Activated B cell treated with CpG ODN at 0.5 μM for 24 hours (primary cell): ENCODE measurements at regions of chr14 and their contacts with region 1.

Region 1: GRCh38 chr14:60980811-60981632 is at the starts of genes SLC38A6 and TRMT5:
- DNase-seq: peak; percentile 88
- ATAC-seq: peak; percentile 83
- H3K4me3 Mint-ChIP-seq: no peak within 1 kb of the TSS
- H3K27ac Mint-ChIP-seq: no peak within 1 kb of the TSS
- H3K4me1 Mint-ChIP-seq: peaks cover 17% of the 10 kb centered on the region
- H3K27me3 Mint-ChIP-seq: no peaks in the 10 kb centered on the region
- CTCF ChIP-seq: no peak
- total RNA-seq, gene SLC38A6: 10.4 and 10.8 TPM in 2 replicates
- total RNA-seq, gene TRMT5: 11.5 and 13.2 TPM in 2 replicates

Region 2: GRCh38 chr14:60164712-60165546 is 816.1 kb before region 1 on chr14 and contains the start of gene DHRS7:
- CTCF ChIA-PET with region 1: no interaction called
- POLR2A ChIA-PET with region 1: no interaction called
- intact Hi-C with region 1: loop called (anchors 1 kb)
- DNase-seq: peak; percentile 70
- ATAC-seq: peak; percentile 88
- H3K4me3 Mint-ChIP-seq: peak within 1 kb of the TSS; percentile 99
- H3K27ac Mint-ChIP-seq: peak within 1 kb of the TSS; percentile 99
- H3K4me1 Mint-ChIP-seq: peaks cover 39% of the 10 kb centered on the region
- H3K27me3 Mint-ChIP-seq: no peaks in the 10 kb centered on the region
- CTCF ChIP-seq: no peak
- total RNA-seq, gene DHRS7: 41.5 and 47.1 TPM in 2 replicates

Region 3: DNA sequence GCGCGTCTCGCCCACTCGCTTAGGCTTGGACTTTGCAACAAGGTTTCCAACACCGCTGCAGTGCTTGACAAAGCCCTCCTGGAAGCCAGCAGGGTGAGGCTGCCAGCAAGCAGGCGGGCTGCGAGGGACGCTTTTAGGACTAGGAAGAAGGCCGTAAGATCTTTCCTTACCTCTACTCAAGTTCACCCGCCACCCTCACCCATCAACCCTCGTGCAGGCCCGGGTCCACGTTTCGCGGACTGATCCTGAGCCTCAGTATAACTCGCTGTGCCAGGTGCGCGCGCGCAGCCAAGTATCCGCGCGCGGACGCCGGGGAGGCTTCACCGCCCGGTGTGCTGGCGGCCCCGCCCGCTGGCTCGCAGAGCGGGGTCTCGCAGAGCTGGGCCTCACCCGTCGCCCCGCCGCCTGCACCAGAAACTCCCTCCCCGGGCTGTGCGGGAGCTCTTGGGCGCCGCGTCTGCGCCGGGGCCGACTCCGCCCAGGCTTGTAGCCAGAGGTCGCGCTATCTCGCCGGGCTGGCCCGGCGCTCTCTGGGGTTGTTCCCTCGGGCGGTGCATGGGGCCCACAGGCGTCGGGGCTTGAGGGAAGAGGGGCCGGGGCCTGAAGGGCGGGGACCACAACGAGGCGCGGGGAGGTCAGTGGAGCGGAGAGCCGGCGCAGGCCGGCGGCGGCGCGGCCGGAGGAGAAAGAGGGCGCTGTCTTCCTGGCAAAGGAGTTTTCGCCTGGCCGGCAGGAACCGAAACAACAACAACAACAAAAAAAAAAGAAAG is 324.2 kb before region 1 on chr14:
- CTCF ChIA-PET with region 1: no interaction called
- POLR2A ChIA-PET with region 1: no interaction called
- intact Hi-C with region 1: loop called (anchors 1 kb)
- DNase-seq: peak; percentile 58
- ATAC-seq: peak; percentile 88
- H3K4me3 Mint-ChIP-seq: peak overlapping the region; percentile 90
- H3K27ac Mint-ChIP-seq: no peak overlapping the region
- H3K4me1 Mint-ChIP-seq: peaks cover 39% of the 10 kb centered on the region
- H3K27me3 Mint-ChIP-seq: peaks cover 68% of the 10 kb centered on the region
- CTCF ChIP-seq: no peak

Region 4: GRCh38 chr14:60724137-60724619 is 256.8 kb before region 1 on chr14 and contains the start of gene SIX4:
- CTCF ChIA-PET with region 1: no interaction called
- POLR2A ChIA-PET with region 1: no interaction called
- intact Hi-C with region 1: loop called (anchors 1 kb)
- DNase-seq: no peak
- ATAC-seq: peak; percentile 26
- H3K4me3 Mint-ChIP-seq: peak within 1 kb of the TSS; percentile 87
- H3K27ac Mint-ChIP-seq: no peak within 1 kb of the TSS
- H3K4me1 Mint-ChIP-seq: peaks cover 22% of the 10 kb centered on the region
- H3K27me3 Mint-ChIP-seq: peaks cover 73% of the 10 kb centered on the region
- CTCF ChIP-seq: no peak
- total RNA-seq, gene SIX4: not detected in 2 replicates

Region 5: GRCh38 chr14:60753264-60754119 is 227.5 kb before region 1 on chr14:
- CTCF ChIA-PET with region 1: no interaction called
- POLR2A ChIA-PET with region 1: interaction called, 9 read pairs
- intact Hi-C with region 1: loop called (anchors 5 kb)
- DNase-seq: no peak
- ATAC-seq: peak; percentile 95
- H3K4me3 Mint-ChIP-seq: peak overlapping the region; percentile 52
- H3K27ac Mint-ChIP-seq: peak overlapping the region; percentile 81
- H3K4me1 Mint-ChIP-seq: peaks cover 42% of the 10 kb centered on the region
- H3K27me3 Mint-ChIP-seq: no peaks in the 10 kb centered on the region
- CTCF ChIP-seq: no peak

Region 6: GRCh38 chr14:60845523-60845922 is 135.5 kb before region 1 on chr14:
- CTCF ChIA-PET with region 1: no interaction called
- POLR2A ChIA-PET with region 1: no interaction called
- intact Hi-C with region 1: loop called (anchors 2 kb)
- DNase-seq: no peak
- ATAC-seq: peak; percentile 83
- H3K4me3 Mint-ChIP-seq: peak overlapping the region; percentile 64
- H3K27ac Mint-ChIP-seq: peak overlapping the region; percentile 92
- H3K4me1 Mint-ChIP-seq: peaks cover 23% of the 10 kb centered on the region
- H3K27me3 Mint-ChIP-seq: no peaks in the 10 kb centered on the region
- CTCF ChIP-seq: no peak

Region 7: DNA sequence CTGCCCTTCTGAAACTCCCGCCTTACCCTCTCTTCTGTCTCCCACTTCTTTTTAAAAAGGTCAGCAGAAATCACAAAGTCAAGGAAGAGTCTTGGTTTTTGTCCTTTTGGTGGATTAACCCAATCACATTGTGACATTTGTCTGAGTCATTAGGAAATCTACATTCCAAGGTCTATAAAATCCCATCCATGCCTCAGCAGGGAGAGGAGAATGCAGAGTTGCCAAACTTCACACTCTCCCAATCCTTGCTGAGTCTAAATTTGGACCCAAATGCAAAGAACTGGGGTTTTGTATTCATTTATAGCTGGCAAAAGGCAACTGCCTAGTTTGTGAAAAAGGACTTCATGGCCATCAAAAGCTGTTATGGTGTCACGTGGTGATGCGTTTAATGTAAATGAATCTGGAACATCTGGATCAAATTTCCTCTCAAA is 232.2 kb after region 1 on chr14:
- CTCF ChIA-PET with region 1: no interaction called
- POLR2A ChIA-PET with region 1: no interaction called
- intact Hi-C with region 1: no loop called
- DNase-seq: no peak
- ATAC-seq: no peak
- H3K4me3 Mint-ChIP-seq: no peak overlapping the region
- H3K27ac Mint-ChIP-seq: no peak overlapping the region
- H3K4me1 Mint-ChIP-seq: no peaks in the 10 kb centered on the region
- H3K27me3 Mint-ChIP-seq: peaks cover 6% of the 10 kb centered on the region
- CTCF ChIP-seq: no peak